A549 (cell line): ENCODE measurements at regions of chr6 and their contacts with region 1.

Region 1: DNA sequence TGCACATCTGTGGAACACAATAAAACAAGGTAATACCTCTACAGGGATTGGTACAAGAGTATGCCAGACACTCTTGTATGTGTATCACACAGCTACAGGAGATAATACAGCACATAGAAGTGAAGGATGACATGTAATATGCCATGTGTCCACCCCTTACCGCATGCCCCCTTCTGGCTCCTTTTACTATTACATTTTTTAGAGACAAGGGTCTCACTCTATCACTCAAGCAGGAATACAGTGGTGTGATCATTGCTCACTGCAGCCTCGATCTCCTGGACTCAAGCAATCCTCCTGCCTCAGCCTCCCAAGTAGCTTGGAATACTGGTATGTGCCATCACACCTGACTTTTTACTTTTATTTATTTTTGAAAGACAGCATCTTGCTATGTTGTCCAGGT is 4.2 kb upstream of the NCR3 start:
- DNase-seq: peak; percentile 39 to 40
- ATAC-seq: peak; percentile 77 to 85
- H3K4me3 ChIP-seq: no peak overlapping the region
- H3K27ac ChIP-seq: no peak overlapping the region
- H3K4me1 ChIP-seq: no peaks in the 10 kb centered on the region
- CTCF ChIP-seq: peak; percentile 37; the same call in 2 of the 3 replicates
- EP300 ChIP-seq: no peak
- POLR2A ChIP-seq: no peak
- RAD21 ChIP-seq: no peak

Region 2: DNA sequence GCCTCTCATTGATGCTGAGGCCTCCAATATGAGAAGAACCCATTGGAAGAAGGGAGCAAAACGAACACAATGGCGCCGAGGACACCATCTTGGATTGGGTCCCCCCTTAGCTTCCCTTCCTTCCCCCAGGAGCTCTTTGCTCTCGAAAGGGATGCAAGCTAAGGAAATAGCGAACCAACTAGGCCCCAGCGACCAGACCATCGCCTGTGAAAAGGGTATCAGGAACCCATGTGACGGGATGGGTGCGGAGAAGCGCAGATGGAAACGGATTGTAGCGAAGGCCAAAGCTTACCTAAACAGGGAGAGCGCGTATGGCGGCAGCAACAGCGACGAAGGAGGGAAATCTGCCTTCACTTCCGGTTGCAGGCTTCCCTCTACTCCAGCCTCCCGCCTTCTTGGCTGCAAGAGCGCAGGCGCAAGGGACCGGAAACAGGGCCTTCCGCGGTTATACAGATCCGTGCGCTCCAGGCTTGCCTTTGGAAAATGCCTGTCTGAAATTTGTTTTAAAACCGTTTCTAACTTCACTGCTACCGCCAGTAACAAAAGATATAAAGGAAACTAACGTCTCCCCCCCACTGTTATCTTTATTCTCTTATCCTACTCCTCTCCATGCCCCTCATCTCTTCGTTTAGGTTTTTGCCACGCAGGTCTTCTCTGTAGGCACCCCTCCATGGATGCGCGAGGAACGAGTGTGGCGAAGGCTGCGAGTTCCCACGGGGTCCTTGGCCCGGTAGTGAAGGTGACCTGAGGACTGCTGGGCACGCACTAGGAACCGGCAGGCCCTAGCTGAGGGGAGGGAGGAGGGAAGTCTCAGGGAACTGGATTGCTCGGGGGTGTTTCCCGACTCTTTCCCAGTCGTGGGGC is 55.1 kb before region 1 on chr6 and contains the start of gene DDX39B:
- CTCF ChIA-PET with region 1: interaction called, 331 read pairs
- POLR2A ChIA-PET with region 1: interaction called, 5 read pairs
- DNase-seq: peak; percentile 81 to 97
- ATAC-seq: peak; percentile 79 to 90
- H3K4me3 ChIP-seq: peak within 1 kb of the TSS; percentile 81
- H3K27ac ChIP-seq: peak within 1 kb of the TSS; percentile 94 to 96
- H3K4me1 ChIP-seq: peaks cover 28% of the 10 kb centered on the region
- CTCF ChIP-seq: no peak
- EP300 ChIP-seq: no peak
- POLR2A ChIP-seq: peak; percentile 87
- RAD21 ChIP-seq: no peak
- polyA plus RNA-seq, gene DDX39B: 267 and 334 TPM in 2 replicates

Region 3: GRCh38 chr6:31568537-31568961 is 28.5 kb before region 1 on chr6:
- CTCF ChIA-PET with region 1: interaction called, 338 read pairs
- POLR2A ChIA-PET with region 1: no interaction called
- DNase-seq: no peak
- ATAC-seq: no peak
- H3K4me3 ChIP-seq: no peak overlapping the region
- H3K27ac ChIP-seq: no peak overlapping the region
- H3K4me1 ChIP-seq: no peaks in the 10 kb centered on the region
- CTCF ChIP-seq: no peak
- EP300 ChIP-seq: no peak
- POLR2A ChIP-seq: no peak
- RAD21 ChIP-seq: no peak

Region 4: DNA sequence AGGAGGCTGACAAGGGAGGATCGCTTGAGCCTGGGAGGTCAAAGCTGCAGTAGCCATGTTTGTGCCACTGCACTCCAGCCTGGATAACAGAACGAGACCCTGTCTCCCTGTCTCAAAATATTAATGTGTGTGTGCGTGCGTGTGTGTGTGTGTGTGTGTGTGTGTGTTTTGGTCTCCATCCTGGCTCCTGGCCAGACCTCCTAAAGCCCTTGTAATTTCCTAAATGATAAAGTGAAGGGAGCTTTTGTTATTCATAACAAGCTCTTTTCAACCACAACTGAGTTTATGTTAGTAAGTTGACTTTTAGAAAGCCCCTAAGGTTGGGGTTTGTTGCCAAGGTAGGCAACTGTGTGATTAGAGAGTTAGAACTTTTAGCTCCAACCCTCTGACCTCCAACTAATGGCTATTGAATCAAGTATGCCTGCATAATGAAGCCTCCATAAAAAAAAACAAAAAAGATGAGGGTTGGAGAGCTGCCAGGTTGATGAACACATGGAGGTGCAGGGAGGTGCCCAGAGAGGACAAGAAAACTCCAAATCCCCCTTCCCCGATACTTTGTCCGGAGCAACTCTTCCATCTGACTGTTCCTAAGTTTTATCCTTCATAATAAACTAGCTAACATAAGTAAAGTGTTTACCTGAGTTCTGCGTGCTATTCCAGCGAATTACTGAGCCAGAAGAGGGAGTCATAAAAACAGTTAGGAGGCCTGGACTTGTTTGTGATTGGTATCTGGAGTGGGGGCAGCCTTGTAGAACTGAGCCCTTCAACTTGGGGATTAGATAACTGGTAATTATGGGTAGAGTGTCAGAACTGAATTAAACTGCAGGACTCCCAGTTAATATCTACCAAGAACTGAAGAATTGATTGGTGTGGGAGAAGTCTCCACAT is 12.8 kb after region 1 on chr6:
- CTCF ChIA-PET with region 1: interaction called, 28 read pairs
- POLR2A ChIA-PET with region 1: no interaction called
- DNase-seq: no peak
- ATAC-seq: no peak
- H3K4me3 ChIP-seq: no peak overlapping the region
- H3K27ac ChIP-seq: no peak overlapping the region
- H3K4me1 ChIP-seq: no peaks in the 10 kb centered on the region
- CTCF ChIP-seq: no peak
- EP300 ChIP-seq: no peak
- POLR2A ChIP-seq: no peak
- RAD21 ChIP-seq: no peak